ENCODE measurements at regions of chr5 and their contacts with region 1.

Region 1: GRCh38 chr5:44774279-44774880 is 34.4 kb upstream of the MRPS30 start:
- DNase-seq: peak in 21 of 42 donors; percentile 3 to 55 (median 14)

Region 2: DNA sequence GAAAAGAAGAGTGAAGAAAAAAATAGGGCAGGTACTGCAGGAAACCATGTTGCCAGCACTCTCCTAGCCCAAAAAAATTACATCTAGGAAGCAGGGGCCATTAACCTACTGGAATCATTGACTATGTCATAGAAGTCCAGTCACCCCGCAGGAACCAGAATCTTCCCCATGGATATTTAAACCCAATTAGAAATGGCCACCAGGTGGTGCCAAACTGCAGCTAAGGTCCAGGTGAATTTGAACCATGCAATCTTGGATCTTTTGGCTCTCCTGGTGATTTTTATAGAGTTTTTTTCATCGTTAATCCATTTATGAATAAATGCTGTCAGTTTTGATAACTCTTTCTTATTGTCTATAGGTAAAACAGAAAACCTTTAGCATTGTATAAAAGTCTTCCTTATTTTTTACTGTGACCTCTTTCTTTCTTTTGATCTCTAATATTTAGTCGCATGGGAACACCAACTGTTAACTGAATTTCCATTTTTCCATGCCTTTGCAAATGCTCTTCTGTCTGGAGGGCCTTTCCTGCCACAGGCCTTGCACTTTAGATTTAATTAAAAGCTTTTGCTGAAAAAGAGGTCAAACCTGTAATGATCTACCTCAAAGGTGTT is 237.6 kb before region 1 on chr5:
- intact Hi-C with region 1: loop called (anchors 10 kb)
- DNase-seq: peak in 24 of 42 donors; percentile 4 to 71 (median 26)

Region 3: GRCh38 chr5:44821164-44821563 is 46.8 kb after region 1 on chr5:
- intact Hi-C with region 1: no loop called
- DNase-seq: no peak